AG04449 (cell line): ENCODE measurements at regions of chr9 and their contacts with region 1.

Region 1: DNA sequence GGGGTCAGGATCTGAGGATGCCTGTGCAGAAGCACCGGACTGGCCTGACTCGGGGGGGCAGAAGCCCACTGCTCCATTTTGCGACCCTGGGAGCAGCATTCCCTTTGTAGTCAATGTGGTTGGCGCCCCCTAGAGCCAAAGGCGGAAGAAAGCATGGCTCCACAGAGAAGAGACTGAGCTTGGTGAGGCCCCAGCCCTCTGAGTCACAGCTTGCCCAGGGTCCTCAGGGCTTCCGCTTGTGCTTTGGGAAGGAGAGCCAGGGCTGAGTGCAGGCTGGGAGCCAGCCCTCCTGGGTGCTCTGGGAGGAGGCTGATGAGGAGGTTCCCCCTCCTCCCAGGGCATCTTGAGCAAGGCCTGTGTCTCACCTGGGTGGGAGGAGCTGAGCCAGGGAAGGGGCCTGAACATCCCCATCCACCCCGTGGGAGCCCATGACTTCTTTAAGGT is 5.5 kb upstream of the AQP3 start:
- DNase-seq: peak; percentile 42
- H3K4me3 ChIP-seq: no peak overlapping the region
- CTCF ChIP-seq: peak; percentile 83

Region 2: DNA sequence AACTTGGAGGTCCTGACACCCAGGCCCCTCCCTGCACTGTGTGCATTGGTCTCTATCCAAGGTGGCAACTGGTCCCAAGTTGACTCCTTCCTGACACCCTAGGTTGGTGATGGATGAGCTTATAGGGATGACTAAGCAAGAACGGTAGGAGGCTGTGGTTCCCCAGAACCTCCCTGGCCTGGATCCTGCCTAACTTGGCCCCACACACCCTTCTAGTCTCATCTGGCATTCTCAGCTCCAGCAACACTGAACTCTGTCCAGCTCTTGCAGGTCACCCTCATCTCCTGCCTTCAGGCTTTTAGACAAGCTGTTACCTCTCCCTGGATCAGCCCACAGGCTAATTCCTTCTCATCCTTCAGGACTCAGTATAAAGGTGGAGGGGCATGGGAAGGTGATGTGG is 21.9 kb before region 1 on chr9:
- CTCF ChIA-PET with region 1: interaction called, 33 read pairs
- POLR2A ChIA-PET with region 1: no interaction called
- DNase-seq: no peak
- H3K4me3 ChIP-seq: no peak overlapping the region
- CTCF ChIP-seq: no peak

Region 3: GRCh38 chr9:33489066-33489465 is 36.2 kb after region 1 on chr9:
- CTCF ChIA-PET with region 1: interaction called, 10 read pairs
- POLR2A ChIA-PET with region 1: no interaction called
- DNase-seq: peak; percentile 26
- H3K4me3 ChIP-seq: no peak overlapping the region
- CTCF ChIP-seq: no peak